OCI-LY7 (cell line): ENCODE measurements at regions of chr14 and their contacts with region 1.

Region 1: GRCh38 chr14:47917345-47917954 is 242.0 kb upstream of the MDGA2 start:
- DNase-seq: peak; percentile 49
- H3K4me3 ChIP-seq: no peak overlapping the region
- H3K27ac ChIP-seq: no peak overlapping the region
- H3K4me1 ChIP-seq: no peaks in the 10 kb centered on the region
- CTCF ChIP-seq: peak; percentile 96

Region 2: GRCh38 chr14:48229091-48229490 is 311.6 kb after region 1 on chr14:
- CTCF ChIA-PET with region 1: no interaction called
- POLR2A ChIA-PET with region 1: no interaction called
- intact Hi-C with region 1: loop called (anchors 10 kb)
- DNase-seq: no peak
- H3K4me3 ChIP-seq: no peak overlapping the region
- H3K27ac ChIP-seq: no peak overlapping the region
- H3K4me1 ChIP-seq: no peaks in the 10 kb centered on the region
- CTCF ChIP-seq: no peak

Region 3: GRCh38 chr14:48398675-48399282 is 481.3 kb after region 1 on chr14:
- CTCF ChIA-PET with region 1: no interaction called
- POLR2A ChIA-PET with region 1: no interaction called
- intact Hi-C with region 1: loop called (anchors 5 kb)
- DNase-seq: peak; percentile 58
- H3K4me3 ChIP-seq: no peak overlapping the region
- H3K27ac ChIP-seq: no peak overlapping the region
- H3K4me1 ChIP-seq: no peaks in the 10 kb centered on the region
- CTCF ChIP-seq: peak; percentile 89

Region 4: GRCh38 chr14:49173765-49174373 is 1256.4 kb after region 1 on chr14:
- CTCF ChIA-PET with region 1: no interaction called
- POLR2A ChIA-PET with region 1: no interaction called
- intact Hi-C with region 1: loop called (anchors 2 kb)
- DNase-seq: peak; percentile 73
- H3K4me3 ChIP-seq: no peak overlapping the region
- H3K27ac ChIP-seq: no peak overlapping the region
- H3K4me1 ChIP-seq: no peaks in the 10 kb centered on the region
- CTCF ChIP-seq: peak; percentile 87